Cardiac septum (tissue), 1 donor: ENCODE measurements at regions of chr1 and their contacts with region 1.

Region 1: GRCh38 chr1:118902711-118903191 is 85.4 kb downstream of the TBX15 start:
- DNase-seq: no peak

Region 2: GRCh38 chr1:118944133-118944532 is 41.4 kb after region 1 on chr1:
- intact Hi-C with region 1: no loop called
- DNase-seq: no peak

Region 3: GRCh38 chr1:118954301-118954905 is 51.7 kb after region 1 on chr1:
- intact Hi-C with region 1: loop called (anchors 5 kb)
- DNase-seq: no peak